Dendritic cell treated with granulocyte-macrophage colony-stimulating factor and Interleukin-4, amounts not matched to agents 40 ng/mL and 50 ng/mL, for 4 days (primary cell): ENCODE measurements at regions of chr2 and their contacts with region 1.

Region 1: DNA sequence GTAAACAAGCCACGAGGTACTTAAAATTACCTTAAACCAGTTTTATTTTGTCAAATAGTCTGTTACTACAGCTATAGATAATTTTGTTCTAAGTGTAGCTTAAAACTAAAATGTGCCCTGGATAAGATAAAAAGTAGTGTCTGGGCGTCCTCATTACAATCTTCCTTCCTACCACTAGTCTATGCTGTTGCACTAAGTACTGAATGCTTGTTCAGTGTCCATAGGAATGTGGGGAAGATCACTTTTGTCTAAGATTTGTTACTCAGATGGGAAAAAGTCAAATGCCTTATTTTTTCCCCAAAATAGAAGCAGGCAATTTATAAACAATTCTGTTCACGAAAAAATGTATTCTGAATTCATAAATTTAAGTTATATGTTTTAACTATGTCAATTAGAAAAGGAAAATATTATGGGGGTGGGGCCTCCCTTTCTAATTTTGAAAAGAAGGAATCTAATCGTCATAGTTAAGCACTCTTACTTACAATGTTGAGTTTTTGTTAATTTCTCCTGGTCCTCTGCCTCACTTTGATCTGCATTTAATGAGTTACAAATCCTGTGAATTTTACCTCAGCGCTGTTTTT is 140.4 kb upstream of the VRK2 start:
- H3K4me3 Mint-ChIP-seq: no peak overlapping the region
- H3K27ac Mint-ChIP-seq: no peak overlapping the region
- H3K4me1 Mint-ChIP-seq: peaks cover 10% of the 10 kb centered on the region
- H3K27me3 Mint-ChIP-seq: no peaks in the 10 kb centered on the region

Region 2: DNA sequence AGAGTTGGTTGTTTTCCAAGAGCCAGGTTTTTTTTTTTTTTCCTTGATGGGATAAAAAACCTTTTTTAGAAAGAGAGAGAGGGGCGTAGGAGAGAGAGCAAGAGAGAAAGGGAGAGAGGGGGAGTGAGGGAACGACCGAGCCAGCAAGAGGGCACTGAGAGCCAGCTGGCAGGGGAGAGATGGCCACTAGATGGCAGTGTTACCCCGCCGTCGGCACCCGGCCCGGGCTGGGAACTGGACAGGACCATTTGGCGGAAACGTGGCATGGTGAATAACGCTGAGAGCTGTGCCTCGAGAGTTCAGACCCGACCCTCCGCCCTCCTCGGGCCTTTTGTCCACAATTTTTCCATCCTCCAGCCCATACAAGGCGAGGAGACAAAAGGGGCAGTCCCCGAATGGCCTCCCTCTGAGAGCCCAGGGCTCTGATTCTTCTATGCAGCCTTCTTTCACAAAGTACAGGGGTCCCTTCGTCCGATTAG is 146.4 kb before region 1 on chr2:
- intact Hi-C with region 1: loop called (anchors 10 kb)
- H3K4me3 Mint-ChIP-seq: peak overlapping the region; percentile 59
- H3K27ac Mint-ChIP-seq: no peak overlapping the region
- H3K4me1 Mint-ChIP-seq: peaks cover 11% of the 10 kb centered on the region
- H3K27me3 Mint-ChIP-seq: no peaks in the 10 kb centered on the region

Region 3: GRCh38 chr2:57776916-57777315 is 129.3 kb before region 1 on chr2:
- intact Hi-C with region 1: no loop called
- H3K4me3 Mint-ChIP-seq: no peak overlapping the region
- H3K27ac Mint-ChIP-seq: no peak overlapping the region
- H3K4me1 Mint-ChIP-seq: no peaks in the 10 kb centered on the region
- H3K27me3 Mint-ChIP-seq: no peaks in the 10 kb centered on the region

Region 4: GRCh38 chr2:57834666-57835065 is 71.6 kb before region 1 on chr2:
- intact Hi-C with region 1: no loop called
- H3K4me3 Mint-ChIP-seq: no peak overlapping the region
- H3K27ac Mint-ChIP-seq: no peak overlapping the region
- H3K4me1 Mint-ChIP-seq: no peaks in the 10 kb centered on the region
- H3K27me3 Mint-ChIP-seq: no peaks in the 10 kb centered on the region

Region 5: DNA sequence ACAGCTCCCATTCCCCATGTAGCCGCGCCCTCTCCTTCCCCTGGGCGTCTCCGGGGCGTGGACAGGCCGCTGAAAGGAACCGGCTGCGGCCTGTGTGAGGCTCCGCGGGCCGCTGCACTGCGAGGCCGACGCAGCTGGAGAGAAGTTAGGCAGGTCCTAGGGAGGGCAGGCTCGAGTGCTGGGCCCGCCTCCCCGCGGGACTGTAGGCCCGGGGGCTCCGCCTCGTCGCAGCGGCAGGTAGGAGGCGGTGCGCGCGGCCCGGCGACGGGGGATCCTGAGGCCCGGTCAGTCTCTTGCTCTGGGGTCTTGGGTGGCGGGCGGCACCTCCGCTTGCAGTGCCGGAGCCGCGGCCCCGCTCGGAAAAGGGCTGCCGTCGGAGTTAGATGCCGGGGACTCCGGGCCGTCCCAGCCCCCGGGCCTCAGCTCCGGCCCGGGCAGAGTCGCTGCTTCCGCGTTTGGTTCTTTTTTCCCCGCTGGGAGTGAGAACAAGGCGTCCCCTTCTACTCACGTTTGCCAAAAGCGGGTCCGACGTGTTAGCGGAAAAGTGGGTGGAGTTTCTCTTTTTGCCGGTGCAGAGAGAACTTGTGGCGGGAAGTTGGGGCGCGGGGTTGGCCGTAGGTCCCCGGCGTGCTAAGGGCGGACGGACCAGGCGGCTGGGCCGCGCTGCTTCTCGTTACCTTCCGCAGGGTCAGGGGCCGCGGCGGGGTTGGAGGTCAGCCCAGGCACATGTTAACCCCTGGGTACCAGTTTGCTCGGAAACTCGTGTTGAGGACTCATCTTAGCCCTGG is 140.5 kb after region 1 on chr2 and contains the start of gene VRK2:
- intact Hi-C with region 1: loop called (anchors 10 kb)
- H3K4me3 Mint-ChIP-seq: peak within 1 kb of the TSS; percentile 92
- H3K27ac Mint-ChIP-seq: peak within 1 kb of the TSS; percentile 98
- H3K4me1 Mint-ChIP-seq: peaks cover 28% of the 10 kb centered on the region
- H3K27me3 Mint-ChIP-seq: no peaks in the 10 kb centered on the region

Region 6: GRCh38 chr2:58107803-58108710 is 201.8 kb after region 1 on chr2:
- intact Hi-C with region 1: loop called (anchors 5 kb)
- H3K4me3 Mint-ChIP-seq: peak overlapping the region; percentile 57
- H3K27ac Mint-ChIP-seq: peak overlapping the region; percentile 77
- H3K4me1 Mint-ChIP-seq: peaks cover 37% of the 10 kb centered on the region
- H3K27me3 Mint-ChIP-seq: no peaks in the 10 kb centered on the region

Region 7: DNA sequence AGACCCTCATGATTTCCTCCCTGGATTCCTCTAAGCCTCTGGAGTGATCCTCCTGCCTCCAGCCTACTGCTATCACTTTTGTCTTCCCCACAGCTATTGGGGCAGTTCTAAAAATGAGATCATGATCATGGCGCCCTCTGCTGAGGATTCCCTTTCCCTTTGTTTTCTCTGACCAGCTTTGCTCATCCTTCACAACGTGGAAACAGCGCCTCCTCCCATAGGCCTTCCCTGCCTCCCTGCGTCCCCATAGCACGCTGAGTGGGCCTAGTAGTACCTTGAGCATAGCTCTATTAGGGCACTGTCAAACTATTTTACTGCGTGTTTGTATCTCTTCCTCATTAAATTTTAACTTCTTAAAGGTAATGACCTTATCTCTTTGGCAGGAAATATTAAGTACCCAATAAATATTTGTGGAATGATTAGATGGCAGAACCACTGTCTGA is 541.8 kb after region 1 on chr2:
- intact Hi-C with region 1: loop called (anchors 2 kb)
- H3K4me3 Mint-ChIP-seq: no peak overlapping the region
- H3K27ac Mint-ChIP-seq: no peak overlapping the region
- H3K4me1 Mint-ChIP-seq: peaks cover 19% of the 10 kb centered on the region
- H3K27me3 Mint-ChIP-seq: no peaks in the 10 kb centered on the region

Region 8: GRCh38 chr2:58571181-58571852 is 665.1 kb after region 1 on chr2:
- intact Hi-C with region 1: loop called (anchors 10 kb)
- H3K4me3 Mint-ChIP-seq: no peak overlapping the region
- H3K27ac Mint-ChIP-seq: no peak overlapping the region
- H3K4me1 Mint-ChIP-seq: peaks cover 24% of the 10 kb centered on the region
- H3K27me3 Mint-ChIP-seq: no peaks in the 10 kb centered on the region